B cell (primary cell): ENCODE measurements at regions of chr1 and their contacts with region 1.

Region 1: GRCh38 chr1:21216835-21217811 is 40.4 kb upstream of the EIF4G3 start:
- DNase-seq: peak; percentile 76
- ATAC-seq: peak; percentile 74
- H3K4me3 ChIP-seq: no peak overlapping the region
- H3K4me3 Mint-ChIP-seq: no peak overlapping the region
- H3K27ac ChIP-seq: peak overlapping the region in 1 of 2 donors; percentile 9
- H3K27ac Mint-ChIP-seq: no peak overlapping the region
- H3K4me1 ChIP-seq: no peaks in the 10 kb centered on the region
- H3K4me1 Mint-ChIP-seq: peaks cover 5% of the 10 kb centered on the region
- H3K27me3 ChIP-seq: no peaks in the 10 kb centered on the region
- H3K27me3 Mint-ChIP-seq: no peaks in the 10 kb centered on the region
- CTCF ChIP-seq: peak; percentile 78

Region 2: GRCh38 chr1:21232044-21232443 is 14.9 kb after region 1 on chr1:
- CTCF ChIA-PET with region 1: interaction called, 31 read pairs
- POLR2A ChIA-PET with region 1: no interaction called
- intact Hi-C with region 1: no loop called
- DNase-seq: peak; percentile 66
- ATAC-seq: peak; percentile 66
- H3K4me3 ChIP-seq: no peak overlapping the region
- H3K4me3 Mint-ChIP-seq: no peak overlapping the region
- H3K27ac ChIP-seq: no peak overlapping the region
- H3K27ac Mint-ChIP-seq: no peak overlapping the region
- H3K4me1 ChIP-seq: no peaks in the 10 kb centered on the region
- H3K4me1 Mint-ChIP-seq: no peaks in the 10 kb centered on the region
- H3K27me3 ChIP-seq: no peaks in the 10 kb centered on the region
- H3K27me3 Mint-ChIP-seq: no peaks in the 10 kb centered on the region
- CTCF ChIP-seq: peak; percentile 97

Region 3: DNA sequence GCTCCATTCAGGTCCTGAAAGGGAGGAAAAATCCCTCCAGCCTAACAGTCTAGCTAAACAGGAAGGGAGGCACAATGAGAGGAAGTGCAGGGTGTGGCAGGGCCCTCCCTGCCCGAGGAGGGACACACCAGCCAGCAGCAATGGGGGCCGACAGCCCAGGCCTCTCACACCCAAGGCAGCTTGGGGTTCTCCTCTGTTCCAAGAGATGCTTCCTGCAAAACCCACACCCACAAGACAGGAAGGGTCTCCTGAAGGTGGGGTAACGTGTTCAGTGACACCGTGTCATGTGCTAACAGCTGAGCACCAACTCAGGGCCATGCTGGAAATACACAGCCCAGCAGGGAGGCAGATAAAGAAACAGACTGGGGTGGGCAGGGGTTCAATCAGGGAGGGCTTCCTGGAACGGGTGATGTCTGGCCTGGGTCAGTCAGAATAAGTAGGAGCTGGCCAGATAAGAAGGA is 62.9 kb after region 1 on chr1:
- CTCF ChIA-PET with region 1: no interaction called
- POLR2A ChIA-PET with region 1: no interaction called
- intact Hi-C with region 1: no loop called
- DNase-seq: no peak
- ATAC-seq: peak; percentile 35
- H3K4me3 ChIP-seq: peak overlapping the region in 2 of 5 experiments; percentile 7 to 51
- H3K4me3 Mint-ChIP-seq: peak overlapping the region; percentile 58
- H3K27ac ChIP-seq: peak overlapping the region; percentile 7 to 71
- H3K27ac Mint-ChIP-seq: peak overlapping the region; percentile 89
- H3K4me1 ChIP-seq: peaks cover 26 to 28% of the 10 kb centered on the region in 2 donors
- H3K4me1 Mint-ChIP-seq: peaks cover 38% of the 10 kb centered on the region
- H3K27me3 ChIP-seq: no peaks in the 10 kb centered on the region
- H3K27me3 Mint-ChIP-seq: no peaks in the 10 kb centered on the region
- CTCF ChIP-seq: no peak

Region 4: DNA sequence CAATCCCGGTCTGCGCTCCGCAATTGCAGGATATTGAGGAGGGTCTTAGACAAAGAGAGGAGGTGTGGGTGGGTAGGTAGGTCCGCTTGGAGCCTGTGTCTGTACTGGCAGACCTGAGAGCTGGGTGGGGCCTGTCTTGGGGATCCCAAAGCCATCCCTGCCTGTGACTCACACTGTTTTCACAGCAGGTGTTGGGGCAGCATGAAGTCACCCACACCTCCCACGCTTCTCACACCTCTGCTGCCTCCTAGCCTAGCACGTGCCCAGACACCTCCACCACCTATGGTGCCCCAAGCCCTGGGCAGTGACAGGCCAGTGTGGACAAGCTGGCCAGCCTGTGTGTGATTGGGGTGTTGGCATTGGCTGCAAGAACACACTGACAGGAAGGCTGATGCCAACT is 138.8 kb after region 1 on chr1:
- CTCF ChIA-PET with region 1: no interaction called
- POLR2A ChIA-PET with region 1: interaction called, 14 read pairs
- intact Hi-C with region 1: no loop called
- DNase-seq: no peak
- ATAC-seq: no peak
- H3K4me3 ChIP-seq: no peak overlapping the region
- H3K4me3 Mint-ChIP-seq: no peak overlapping the region
- H3K27ac ChIP-seq: no peak overlapping the region
- H3K27ac Mint-ChIP-seq: no peak overlapping the region
- H3K4me1 ChIP-seq: no peaks in the 10 kb centered on the region
- H3K4me1 Mint-ChIP-seq: no peaks in the 10 kb centered on the region
- H3K27me3 ChIP-seq: no peaks in the 10 kb centered on the region
- H3K27me3 Mint-ChIP-seq: no peaks in the 10 kb centered on the region
- CTCF ChIP-seq: no peak